Common myeloid progenitor, CD34-positive (primary cell): ENCODE measurements at regions of chr7 and their contacts with region 1.

Region 1: GRCh38 chr7:130941322-130942210 is 207.6 kb upstream of the KLF14 start:
- DNase-seq: peak in 2 of 3 donors; percentile 22 to 38
- H3K4me3 ChIP-seq: peak overlapping the region in 5 of 7 experiments; percentile 43 to 71 (median 59)
- H3K27ac ChIP-seq: peak overlapping the region; percentile 56 to 89
- H3K4me1 ChIP-seq: peaks cover 4 to 23% (median 16%) of the 10 kb centered on the region in 4 experiments
- H3K27me3 ChIP-seq: no peaks in the 10 kb centered on the region

Region 2: GRCh38 chr7:130929896-130930659 is 11.5 kb before region 1 on chr7:
- CTCF ChIA-PET with region 1: interaction called, 10 read pairs
- POLR2A ChIA-PET with region 1: interaction called, 8 read pairs
- DNase-seq: peak in 2 of 3 donors; percentile 50 to 68
- H3K4me3 ChIP-seq: no peak overlapping the region
- H3K27ac ChIP-seq: no peak overlapping the region
- H3K4me1 ChIP-seq: peaks cover 6 to 38% (median 24%) of the 10 kb centered on the region in 4 experiments
- H3K27me3 ChIP-seq: no peaks in the 10 kb centered on the region

Region 3: GRCh38 chr7:130961128-130961601 is 19.6 kb after region 1 on chr7:
- CTCF ChIA-PET with region 1: interaction called, 21 read pairs
- POLR2A ChIA-PET with region 1: interaction called, 5 read pairs
- DNase-seq: peak; percentile 30 to 88 (median 83)
- H3K4me3 ChIP-seq: peak overlapping the region in 4 of 7 experiments; percentile 19 to 68 (median 62)
- H3K27ac ChIP-seq: peak overlapping the region; percentile 36 to 70
- H3K4me1 ChIP-seq: peaks cover 20 to 71% (median 38%) of the 10 kb centered on the region in 4 experiments
- H3K27me3 ChIP-seq: no peaks in the 10 kb centered on the region

Region 4: DNA sequence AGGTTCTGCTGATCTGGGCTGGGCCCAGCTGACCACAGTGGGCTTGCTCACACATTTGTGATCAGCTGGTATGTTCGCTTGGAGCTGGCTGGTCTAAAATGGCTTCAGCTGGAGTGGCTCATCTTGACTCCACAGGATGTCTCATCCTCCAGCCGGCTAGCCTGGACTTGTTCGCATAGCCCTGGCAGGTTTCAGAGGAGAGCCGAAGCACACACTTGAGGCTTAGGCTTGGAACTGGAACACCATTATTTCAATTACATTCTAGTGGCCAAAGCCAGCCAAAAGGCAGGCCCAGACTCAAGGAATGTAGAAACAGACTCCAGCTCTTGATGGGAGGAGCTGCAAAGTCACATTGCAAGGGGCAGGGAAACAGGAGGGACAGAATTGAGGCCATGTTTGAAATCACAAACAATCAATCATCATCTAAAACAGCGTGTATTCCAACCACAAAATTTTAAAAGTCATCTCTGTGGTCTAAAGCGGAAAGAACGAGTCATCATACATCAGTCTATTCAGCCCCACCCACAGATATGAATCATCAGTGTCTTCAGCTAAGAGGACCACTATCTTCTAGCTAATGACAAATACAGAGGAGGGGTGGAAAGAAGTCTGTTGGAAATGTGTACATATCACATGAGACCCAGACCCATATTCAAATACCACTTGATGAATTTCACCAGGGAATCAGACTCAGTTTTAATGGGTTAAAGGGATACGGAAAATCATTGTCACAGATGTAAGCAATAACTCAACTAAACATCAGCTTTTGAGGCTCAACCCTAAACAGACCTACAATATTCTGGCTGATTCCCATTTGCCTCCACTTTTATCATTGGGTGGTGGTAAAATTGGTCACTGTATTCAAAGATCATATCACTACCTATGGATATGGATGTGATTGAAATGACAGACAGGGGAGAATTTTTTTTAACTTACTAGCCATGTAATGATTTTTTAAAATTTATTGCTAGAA is 247.1 kb after region 1 on chr7:
- CTCF ChIA-PET with region 1: no interaction called
- POLR2A ChIA-PET with region 1: no interaction called
- DNase-seq: peak; percentile 84 to 94 (median 94)
- H3K4me3 ChIP-seq: no peak overlapping the region
- H3K27ac ChIP-seq: no peak overlapping the region
- H3K4me1 ChIP-seq: peaks cover 2 to 16% (median 7%) of the 10 kb centered on the region in 4 experiments
- H3K27me3 ChIP-seq: no peaks in the 10 kb centered on the region